Mammary epithelial cell (primary cell): ENCODE measurements at regions of chr12 and their contacts with region 1.

Region 1: DNA sequence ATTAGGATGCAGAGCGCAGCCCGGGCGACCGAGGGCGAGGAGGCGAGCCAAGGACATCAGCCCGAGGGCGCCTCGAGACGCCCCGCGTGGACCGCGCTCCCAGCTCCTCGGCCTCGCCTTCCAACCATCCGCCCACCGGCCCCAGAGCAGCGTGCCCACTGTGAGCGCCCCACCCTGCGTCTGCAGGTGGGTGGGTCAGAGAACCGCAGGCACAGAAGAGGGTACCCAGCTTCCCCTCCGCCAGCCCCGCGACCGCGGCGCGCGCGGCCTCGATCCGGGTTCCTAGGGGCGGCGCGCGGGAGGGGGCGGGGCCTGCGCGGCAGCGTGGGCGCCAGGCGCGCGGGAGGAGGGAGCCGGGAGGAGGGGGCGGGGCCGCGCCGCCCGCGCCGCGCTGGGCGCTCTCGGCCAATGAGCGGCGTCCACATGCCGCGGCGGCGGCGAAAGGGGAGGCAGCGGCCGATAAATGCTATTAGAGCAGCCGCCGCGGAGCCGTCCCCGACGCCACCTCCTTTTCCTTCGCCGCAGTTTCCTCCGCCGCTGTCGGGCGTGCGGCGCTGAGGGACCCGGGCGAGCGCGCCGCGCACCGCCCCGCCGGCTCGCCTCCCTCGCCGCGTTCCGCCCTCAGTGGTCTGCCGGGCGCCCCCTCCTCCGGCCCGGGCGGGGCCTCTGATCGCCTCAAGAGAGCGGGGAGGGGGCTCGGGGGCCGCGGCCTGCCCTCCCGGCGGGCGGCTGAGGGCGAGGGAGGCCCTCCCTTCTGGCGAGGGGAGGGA is at the start of gene ATP2A2:
- DNase-seq: peak; percentile 87
- H3K4me3 ChIP-seq: peak within 1 kb of the TSS; percentile 91 to 94 (median 91)
- H3K27ac ChIP-seq: peak within 1 kb of the TSS; percentile 84
- H3K4me1 ChIP-seq: peaks cover 33% of the 10 kb centered on the region
- H3K27me3 ChIP-seq: no peaks in the 10 kb centered on the region
- CTCF ChIP-seq: no peak
- total RNA-seq, gene ATP2A2: 311 to 337 TPM

Region 2: DNA sequence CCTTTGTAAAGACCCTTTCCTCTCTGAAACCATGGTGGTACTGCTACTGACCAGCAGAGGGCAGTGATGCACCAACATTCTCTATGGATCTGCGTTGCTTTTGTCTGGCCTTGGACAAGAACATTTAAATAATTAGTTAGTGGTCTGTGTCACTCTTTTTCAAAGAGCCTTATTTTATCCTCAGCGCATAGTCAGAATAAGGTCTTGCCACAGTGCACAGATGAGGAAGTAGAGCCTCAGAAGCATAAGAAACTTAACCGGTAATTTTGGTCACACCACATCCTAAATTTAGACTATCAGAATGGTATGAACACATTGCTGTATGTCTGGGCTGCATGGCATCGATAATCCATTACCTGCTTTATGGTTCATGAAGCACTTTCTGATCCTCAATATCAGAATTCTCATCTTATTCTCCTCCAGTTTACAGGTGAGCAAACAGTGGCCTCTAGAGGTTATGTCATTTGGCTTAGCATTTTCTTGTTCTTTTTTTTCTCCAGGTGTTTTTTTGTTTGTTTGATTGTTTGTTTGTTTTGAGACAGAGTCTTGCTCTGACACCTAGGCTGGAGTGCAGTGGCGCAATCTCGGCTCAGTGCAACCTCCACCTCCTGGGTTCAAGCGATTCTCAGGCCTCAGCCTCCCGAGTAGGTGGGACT is 180.5 kb before region 1 on chr12:
- CTCF ChIA-PET with region 1: no interaction called
- dilution Hi-C with region 1: no loop called
- in situ Hi-C with region 1: no loop called
- intact Hi-C with region 1: loop called (anchors 2 kb)
- DNase-seq: peak; percentile 32
- H3K4me3 ChIP-seq: no peak overlapping the region
- H3K27ac ChIP-seq: no peak overlapping the region
- H3K4me1 ChIP-seq: peaks cover 3% of the 10 kb centered on the region
- H3K27me3 ChIP-seq: no peaks in the 10 kb centered on the region
- CTCF ChIP-seq: peak; percentile 92 to 97

Region 3: GRCh38 chr12:110224379-110225304 is 56.3 kb before region 1 on chr12:
- CTCF ChIA-PET with region 1: no interaction called
- dilution Hi-C with region 1: no loop called
- in situ Hi-C with region 1: no loop called
- intact Hi-C with region 1: loop called (anchors 1 kb)
- DNase-seq: peak; percentile 74
- H3K4me3 ChIP-seq: peak overlapping the region; percentile 14 to 40 (median 36)
- H3K27ac ChIP-seq: peak overlapping the region; percentile 95
- H3K4me1 ChIP-seq: peaks cover 25% of the 10 kb centered on the region
- H3K27me3 ChIP-seq: no peaks in the 10 kb centered on the region
- CTCF ChIP-seq: peak; percentile 57 to 69

Region 4: DNA sequence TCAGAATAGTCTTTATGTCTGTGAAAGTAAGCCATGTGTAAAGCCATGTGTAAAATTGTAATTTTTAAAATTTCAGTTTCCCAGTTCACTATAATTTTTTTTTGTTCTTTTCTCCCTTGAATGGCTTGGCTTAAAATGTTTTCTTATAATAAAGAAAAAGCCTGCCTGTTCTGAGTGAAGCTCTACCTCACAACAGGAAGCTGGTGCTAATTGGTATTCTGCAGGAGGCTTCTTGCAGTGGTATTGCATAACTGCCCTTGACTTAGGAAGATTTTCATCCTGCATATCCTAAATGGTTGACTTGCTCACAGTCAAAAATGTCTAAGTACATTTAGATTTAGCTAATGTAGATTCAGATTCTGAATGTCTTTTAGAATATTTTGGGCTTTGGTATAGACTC is 49.6 kb after region 1 on chr12:
- CTCF ChIA-PET with region 1: no interaction called
- dilution Hi-C with region 1: loop called (anchors 5 kb)
- in situ Hi-C with region 1: no loop called
- intact Hi-C with region 1: loop called (anchors 5 kb)
- DNase-seq: peak; percentile 30
- H3K4me3 ChIP-seq: no peak overlapping the region
- H3K27ac ChIP-seq: no peak overlapping the region
- H3K4me1 ChIP-seq: peaks cover 6% of the 10 kb centered on the region
- H3K27me3 ChIP-seq: no peaks in the 10 kb centered on the region
- CTCF ChIP-seq: no peak

Region 5: GRCh38 chr12:110431957-110432587 is 151.1 kb after region 1 on chr12:
- CTCF ChIA-PET with region 1: no interaction called
- dilution Hi-C with region 1: no loop called
- in situ Hi-C with region 1: no loop called
- intact Hi-C with region 1: loop called (anchors 1 kb)
- DNase-seq: no peak
- H3K4me3 ChIP-seq: no peak overlapping the region
- H3K27ac ChIP-seq: no peak overlapping the region
- H3K4me1 ChIP-seq: no peaks in the 10 kb centered on the region
- H3K27me3 ChIP-seq: no peaks in the 10 kb centered on the region
- CTCF ChIP-seq: no peak

Region 6: GRCh38 chr12:110528277-110528839 is 247.4 kb after region 1 on chr12:
- CTCF ChIA-PET with region 1: no interaction called
- dilution Hi-C with region 1: no loop called
- in situ Hi-C with region 1: no loop called
- intact Hi-C with region 1: no loop called
- DNase-seq: no peak
- H3K4me3 ChIP-seq: no peak overlapping the region
- H3K27ac ChIP-seq: no peak overlapping the region
- H3K4me1 ChIP-seq: peaks cover 19% of the 10 kb centered on the region
- H3K27me3 ChIP-seq: no peaks in the 10 kb centered on the region
- CTCF ChIP-seq: no peak